Ascending aorta (tissue), 2 donors: ENCODE measurements at regions of chr3 and their contacts with region 1.

Region 1: GRCh38 chr3:151864423-151865101 is 8.9 kb upstream of the SUCNR1 start:
- DNase-seq: no peak
- H3K4me3 ChIP-seq: no peak overlapping the region
- H3K27ac ChIP-seq: no peak overlapping the region
- H3K4me1 ChIP-seq: no peaks in the 10 kb centered on the region
- H3K27me3 ChIP-seq: no peaks in the 10 kb centered on the region
- CTCF ChIP-seq: no peak

Region 2: DNA sequence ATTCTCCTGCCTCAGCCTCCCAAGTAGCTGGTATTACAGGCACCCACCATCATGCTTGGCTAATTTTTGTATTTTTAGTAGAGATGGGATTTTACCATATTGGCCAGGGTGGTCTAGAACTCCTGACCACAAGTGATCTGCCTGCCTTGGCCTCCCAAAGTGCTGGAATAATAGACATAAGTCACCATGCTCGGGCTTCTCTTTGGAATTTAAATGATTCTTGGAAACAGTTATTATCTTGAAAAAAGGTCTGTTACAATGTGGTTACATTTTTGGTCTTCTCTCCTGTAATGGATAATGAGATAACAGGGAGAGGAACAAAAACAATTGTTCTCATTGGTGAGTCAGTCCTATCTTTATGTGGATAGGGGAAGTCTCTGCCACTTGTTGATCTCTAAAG is 190.6 kb before region 1 on chr3:
- intact Hi-C with region 1: no loop called
- DNase-seq: no peak
- H3K4me3 ChIP-seq: no peak overlapping the region
- H3K27ac ChIP-seq: no peak overlapping the region
- H3K4me1 ChIP-seq: no peaks in the 10 kb centered on the region
- H3K27me3 ChIP-seq: no peaks in the 10 kb centered on the region
- CTCF ChIP-seq: no peak

Region 3: GRCh38 chr3:151903501-151903991 is 39.0 kb after region 1 on chr3:
- intact Hi-C with region 1: loop called (anchors 5 kb)
- DNase-seq: no peak
- H3K4me3 ChIP-seq: no peak overlapping the region
- H3K27ac ChIP-seq: peak overlapping the region; percentile 63 to 67
- H3K4me1 ChIP-seq: peaks cover 4 to 22% of the 10 kb centered on the region in 2 donors
- H3K27me3 ChIP-seq: no peaks in the 10 kb centered on the region
- CTCF ChIP-seq: no peak